ENCODE measurements at regions of chr10 and their contacts with region 1.

Region 1: DNA sequence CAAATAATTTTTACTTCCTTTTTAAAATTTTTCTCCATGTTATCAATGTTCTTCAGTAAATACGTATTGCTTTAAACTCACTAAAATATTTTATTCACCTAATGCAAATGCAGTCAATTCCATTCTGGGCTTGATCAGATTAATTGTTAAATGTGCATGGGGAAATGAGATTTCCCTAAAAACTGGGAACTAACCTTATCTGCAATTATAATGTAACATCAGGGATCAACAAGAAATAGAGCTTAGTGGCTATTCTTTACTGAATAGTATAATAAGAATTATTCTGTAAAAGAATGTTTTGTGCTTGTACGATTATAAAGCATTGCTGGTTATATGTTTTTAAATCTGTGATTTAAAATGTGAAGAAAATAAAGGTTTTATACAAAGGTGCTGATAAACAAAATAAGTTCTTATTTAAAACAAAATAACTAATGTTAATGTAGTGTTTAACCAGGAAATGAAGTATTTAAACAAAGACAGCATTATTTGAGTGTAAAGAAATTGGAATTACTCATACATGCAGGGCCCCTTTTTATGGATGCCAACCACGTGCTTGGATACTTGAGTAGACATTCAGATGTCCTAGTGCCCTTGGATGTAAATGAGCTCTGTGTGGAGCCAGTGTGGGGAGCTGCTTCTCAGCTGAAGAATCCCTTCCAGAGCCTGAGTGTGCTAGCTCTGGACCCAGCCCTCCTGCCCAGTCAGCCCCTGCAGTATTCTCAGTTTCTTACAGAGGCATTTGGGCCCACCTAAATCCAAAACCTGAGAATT is 84.2 kb downstream of the REEP3 start:
- DNase-seq: no peak
- H3K4me3 Mint-ChIP-seq: no peak overlapping the region
- H3K27ac Mint-ChIP-seq: no peak overlapping the region
- H3K4me1 Mint-ChIP-seq: peaks cover 14% of the 10 kb centered on the region
- H3K27me3 Mint-ChIP-seq: no peaks in the 10 kb centered on the region

Region 2: GRCh38 chr10:62715383-62715782 is 890.0 kb before region 1 on chr10:
- CTCF ChIA-PET with region 1: no interaction called
- intact Hi-C with region 1: no loop called
- DNase-seq: no peak
- H3K4me3 Mint-ChIP-seq: no peak overlapping the region
- H3K27ac Mint-ChIP-seq: no peak overlapping the region
- H3K4me1 Mint-ChIP-seq: peaks cover 5% of the 10 kb centered on the region
- H3K27me3 Mint-ChIP-seq: no peaks in the 10 kb centered on the region

Region 3: DNA sequence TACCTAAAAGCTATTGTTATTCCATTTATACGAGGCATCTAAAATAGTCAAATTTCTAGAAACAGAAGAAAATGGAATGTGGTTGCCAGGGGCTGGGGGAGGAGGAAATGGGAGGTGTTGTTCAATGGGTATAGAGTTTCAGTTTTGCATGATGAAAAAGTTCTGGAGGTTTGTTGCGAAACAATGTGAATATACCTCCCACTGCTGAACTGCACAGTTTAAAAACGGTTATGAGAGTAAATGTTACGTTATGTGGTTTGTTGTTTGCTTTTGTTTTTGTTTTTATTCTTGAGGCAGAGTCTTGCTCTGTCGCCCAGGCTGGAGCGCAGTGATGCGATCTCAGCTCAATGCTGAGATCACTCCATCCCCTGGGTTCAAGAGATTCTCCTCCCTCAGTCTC is 537.1 kb before region 1 on chr10:
- CTCF ChIA-PET with region 1: no interaction called
- intact Hi-C with region 1: no loop called
- DNase-seq: no peak
- H3K4me3 Mint-ChIP-seq: no peak overlapping the region
- H3K27ac Mint-ChIP-seq: no peak overlapping the region
- H3K4me1 Mint-ChIP-seq: peaks cover 10% of the 10 kb centered on the region
- H3K27me3 Mint-ChIP-seq: peaks cover 43% of the 10 kb centered on the region

Region 4: DNA sequence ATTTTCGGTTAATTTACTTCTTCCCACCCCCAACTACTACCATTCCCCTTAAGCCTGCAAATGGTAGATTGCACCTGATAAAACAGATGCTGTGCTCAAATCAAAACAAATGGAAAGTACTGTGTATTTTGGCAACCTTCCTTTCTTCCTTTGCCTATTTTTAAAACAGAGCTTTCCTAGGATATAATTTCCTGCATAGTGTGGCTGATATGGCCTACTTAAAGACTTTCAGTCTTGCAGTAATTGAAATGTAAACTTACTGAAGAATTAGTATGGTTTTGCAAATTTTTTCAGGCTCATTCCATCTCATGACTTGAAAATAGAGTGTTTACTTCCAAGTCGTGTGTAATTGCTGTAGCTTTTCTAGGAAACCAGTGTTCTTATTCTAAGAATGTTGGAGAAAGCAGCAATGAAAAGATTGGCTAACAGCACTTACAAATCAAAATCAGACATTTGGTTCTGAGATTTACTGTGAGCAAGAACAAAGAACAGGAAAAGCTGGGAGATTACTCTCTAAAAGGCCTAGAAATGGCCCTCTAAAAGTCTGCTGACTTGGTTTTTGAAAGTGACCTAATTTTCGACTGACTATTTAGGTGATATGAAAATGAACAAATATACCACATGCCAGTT is 32.2 kb before region 1 on chr10:
- CTCF ChIA-PET with region 1: no interaction called
- intact Hi-C with region 1: loop called (anchors 5 kb)
- DNase-seq: no peak
- H3K4me3 Mint-ChIP-seq: no peak overlapping the region
- H3K27ac Mint-ChIP-seq: no peak overlapping the region
- H3K4me1 Mint-ChIP-seq: peaks cover 15% of the 10 kb centered on the region
- H3K27me3 Mint-ChIP-seq: no peaks in the 10 kb centered on the region

Measured in activated naive CD4-positive, alpha-beta T cell treated with anti-CD3 and anti-CD28 coated beads for 36 hours (primary cell).